Activated CD8-positive, alpha-beta memory T cell treated with anti-CD3 and anti-CD28 coated beads, Interleukin-2, amount 10 ng/mL, durations not matched to agents 7 days and 5 days (primary cell): ENCODE measurements at regions of chr2 and their contacts with region 1.

Region 1: GRCh38 chr2:200864176-200864976 is at the start of gene CLK1:
- DNase-seq: peak; percentile 98
- ATAC-seq: peak; percentile 84
- H3K4me3 Mint-ChIP-seq: peak within 1 kb of the TSS; percentile 84
- H3K27ac Mint-ChIP-seq: peak within 1 kb of the TSS; percentile 99
- H3K4me1 Mint-ChIP-seq: peaks cover 47% of the 10 kb centered on the region
- H3K27me3 Mint-ChIP-seq: no peaks in the 10 kb centered on the region
- total RNA-seq, gene CLK1: 129 to 130 TPM

Region 2: GRCh38 chr2:200888704-200889625 is 24.6 kb after region 1 on chr2 and contains the starts of genes NIF3L1 and PPIL3:
- CTCF ChIA-PET with region 1: interaction called, 17 read pairs
- DNase-seq: peak; percentile 99
- ATAC-seq: peak; percentile 78
- H3K4me3 Mint-ChIP-seq: peak within 1 kb of the TSS; percentile 89
- H3K27ac Mint-ChIP-seq: peak within 1 kb of the TSS; percentile 97
- H3K4me1 Mint-ChIP-seq: peaks cover 52% of the 10 kb centered on the region
- H3K27me3 Mint-ChIP-seq: no peaks in the 10 kb centered on the region
- total RNA-seq, gene NIF3L1: 28.3 to 37.6 TPM
- total RNA-seq, gene PPIL3: 40.2 to 41.5 TPM